ENCODE measurements at regions of chr4 and their contacts with region 1.

Region 1: DNA sequence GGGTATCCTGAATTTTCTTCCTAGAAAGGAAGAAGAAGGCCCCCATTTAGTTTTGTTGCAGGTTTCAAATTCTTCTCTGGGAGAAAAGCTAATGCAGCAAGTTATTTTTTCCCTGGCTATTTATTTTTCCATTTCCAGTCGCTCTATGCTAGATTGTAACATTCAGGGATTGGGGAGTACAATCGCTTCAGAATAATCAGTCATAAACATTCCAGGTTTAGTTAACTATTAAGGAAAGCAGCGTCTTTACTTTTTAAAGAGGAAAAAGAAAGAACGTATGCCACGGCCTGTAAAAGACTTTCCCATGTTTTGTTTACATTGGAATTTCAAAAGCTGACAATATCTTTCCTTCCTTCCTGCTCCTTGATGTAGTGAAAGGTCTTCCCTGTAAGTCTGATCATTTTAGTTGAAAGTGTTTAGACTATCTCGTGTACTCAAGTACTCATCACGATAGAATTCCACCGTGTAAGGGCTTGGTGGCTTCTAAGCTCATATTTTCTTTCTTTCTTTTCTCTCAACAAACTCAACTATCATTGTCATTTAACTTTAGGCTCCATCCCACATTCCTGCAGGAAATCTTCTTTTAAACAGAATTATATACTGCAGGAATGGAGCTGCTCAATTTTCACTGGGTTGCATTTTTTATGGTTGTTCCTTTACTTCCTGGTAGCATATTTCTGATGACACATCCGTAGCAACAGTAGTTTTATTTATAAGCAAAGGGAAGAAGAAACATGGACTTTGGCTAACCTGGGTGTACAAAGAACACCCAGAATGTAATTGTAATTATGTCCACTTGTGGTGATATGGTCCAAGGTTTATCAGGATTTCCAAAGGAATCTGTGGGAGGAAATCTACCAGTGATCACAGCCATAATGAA is 213.1 kb upstream of the FAT1 start:
- DNase-seq: peak; percentile 95
- ATAC-seq: peak; percentile 87
- H3K4me3 ChIP-seq: peak overlapping the region; percentile 33 to 55 (median 51); a peak in 5 of 6 replicates
- H3K27ac ChIP-seq: peak overlapping the region; percentile 88
- H3K4me1 ChIP-seq: peaks cover 81% of the 10 kb centered on the region
- H3K27me3 ChIP-seq: no peaks in the 10 kb centered on the region
- CTCF ChIP-seq: peak; percentile 31
- EP300 ChIP-seq: peak; percentile 70 to 82; a peak in 3 of 4 replicates
- POLR2A ChIP-seq: no peak
- RAD21 ChIP-seq: no peak

Region 2: DNA sequence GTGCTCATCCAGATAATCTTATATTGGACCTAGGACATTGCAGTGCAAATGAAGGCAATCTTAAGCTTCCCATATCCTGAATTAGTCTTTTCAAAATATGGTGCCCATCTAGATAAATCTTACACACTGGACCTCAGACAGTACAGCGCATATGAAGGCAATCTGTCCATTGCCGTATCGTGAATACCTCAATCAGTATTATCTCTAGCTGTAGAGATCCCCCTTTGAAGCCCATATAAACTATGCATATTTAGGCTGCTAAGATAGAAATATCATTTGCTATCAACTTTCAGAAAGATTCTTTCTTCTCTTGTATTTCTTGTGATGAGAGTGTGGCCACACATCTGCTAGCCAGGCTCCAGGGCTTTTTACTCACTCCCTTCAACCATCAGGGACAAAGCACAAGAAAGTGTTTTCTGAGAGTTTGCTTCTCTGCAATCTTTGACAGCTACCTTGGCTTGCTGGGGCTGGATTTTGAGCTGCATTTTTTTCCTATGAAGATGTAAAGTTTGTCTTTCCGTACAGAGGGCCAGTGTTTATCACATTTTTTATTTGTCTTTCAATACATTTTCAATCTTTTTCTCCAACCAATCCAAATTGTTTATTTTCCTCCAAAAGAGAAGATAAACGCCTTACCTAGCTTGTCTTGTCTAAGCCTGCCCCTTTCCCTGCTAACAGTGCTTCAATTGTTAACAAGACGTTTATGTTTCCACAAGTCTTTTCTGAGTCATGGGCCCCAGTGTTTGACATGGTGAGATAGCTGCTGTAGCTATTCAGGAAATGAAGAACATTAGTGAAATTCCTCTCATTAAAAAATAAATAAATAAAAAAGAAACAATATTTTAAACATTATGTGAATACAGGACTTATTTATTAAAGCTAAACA is 155.5 kb before region 1 on chr4:
- CTCF ChIA-PET with region 1: no interaction called
- POLR2A ChIA-PET with region 1: no interaction called
- in situ Hi-C with region 1: no loop called
- intact Hi-C with region 1: loop called (anchors 5 kb)
- DNase-seq: peak; percentile 93
- ATAC-seq: peak; percentile 95
- H3K4me3 ChIP-seq: no peak overlapping the region; a peak in 1 of 6 replicates
- H3K27ac ChIP-seq: peak overlapping the region; percentile 64
- H3K4me1 ChIP-seq: peaks cover 76% of the 10 kb centered on the region
- H3K27me3 ChIP-seq: no peaks in the 10 kb centered on the region
- CTCF ChIP-seq: no peak
- EP300 ChIP-seq: peak in 1 of 2 experiments; percentile 77; a peak in 2 of 4 replicates
- POLR2A ChIP-seq: no peak
- RAD21 ChIP-seq: no peak

Region 3: GRCh38 chr4:186946682-186947294 is 10.1 kb after region 1 on chr4:
- CTCF ChIA-PET with region 1: no interaction called
- POLR2A ChIA-PET with region 1: no interaction called
- in situ Hi-C with region 1: no loop called
- intact Hi-C with region 1: loop called (anchors 1 kb)
- DNase-seq: peak; percentile 78
- ATAC-seq: peak; percentile 99
- H3K4me3 ChIP-seq: peak overlapping the region; percentile 9 to 58 (median 11); a peak in 2 of 6 replicates
- H3K27ac ChIP-seq: no peak overlapping the region
- H3K4me1 ChIP-seq: peaks cover 54% of the 10 kb centered on the region
- H3K27me3 ChIP-seq: peaks cover 0 to 6% of the 10 kb centered on the region in 2 experiments; a peak in 1 of 5 replicates
- CTCF ChIP-seq: peak; percentile 93
- EP300 ChIP-seq: no peak
- POLR2A ChIP-seq: no peak
- RAD21 ChIP-seq: peak; percentile 95

Region 4: DNA sequence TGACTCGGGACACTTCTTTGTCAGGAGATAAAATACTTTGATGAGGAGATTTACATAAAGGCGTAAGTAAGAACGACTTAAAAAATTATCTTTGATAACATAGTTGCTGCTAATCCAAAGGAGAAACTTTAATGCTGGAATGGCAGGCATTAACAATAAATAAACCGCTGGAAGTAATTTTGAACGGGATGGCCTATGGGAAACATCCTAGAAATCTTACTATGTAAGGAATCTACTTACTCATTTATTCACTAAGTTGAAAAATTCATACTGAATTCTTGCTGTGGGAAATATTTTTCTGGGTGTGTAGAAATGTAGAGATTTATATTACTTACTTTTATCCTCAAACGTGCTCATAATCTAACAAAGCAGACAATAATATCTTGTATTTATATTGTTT is 633.1 kb after region 1 on chr4:
- CTCF ChIA-PET with region 1: no interaction called
- POLR2A ChIA-PET with region 1: no interaction called
- in situ Hi-C with region 1: no loop called
- intact Hi-C with region 1: no loop called
- DNase-seq: no peak
- ATAC-seq: no peak
- H3K4me3 ChIP-seq: no peak overlapping the region
- H3K27ac ChIP-seq: no peak overlapping the region
- H3K4me1 ChIP-seq: no peaks in the 10 kb centered on the region
- H3K27me3 ChIP-seq: no peaks in the 10 kb centered on the region
- CTCF ChIP-seq: no peak
- EP300 ChIP-seq: no peak
- POLR2A ChIP-seq: no peak
- RAD21 ChIP-seq: no peak

Measured in HepG2 (cell line).